Activated CD4-positive, alpha-beta T cell treated with anti-CD3 and anti-CD28 coated beads for 36 hours (primary cell): ENCODE measurements at regions of chr10 and their contacts with region 1.

Region 1: DNA sequence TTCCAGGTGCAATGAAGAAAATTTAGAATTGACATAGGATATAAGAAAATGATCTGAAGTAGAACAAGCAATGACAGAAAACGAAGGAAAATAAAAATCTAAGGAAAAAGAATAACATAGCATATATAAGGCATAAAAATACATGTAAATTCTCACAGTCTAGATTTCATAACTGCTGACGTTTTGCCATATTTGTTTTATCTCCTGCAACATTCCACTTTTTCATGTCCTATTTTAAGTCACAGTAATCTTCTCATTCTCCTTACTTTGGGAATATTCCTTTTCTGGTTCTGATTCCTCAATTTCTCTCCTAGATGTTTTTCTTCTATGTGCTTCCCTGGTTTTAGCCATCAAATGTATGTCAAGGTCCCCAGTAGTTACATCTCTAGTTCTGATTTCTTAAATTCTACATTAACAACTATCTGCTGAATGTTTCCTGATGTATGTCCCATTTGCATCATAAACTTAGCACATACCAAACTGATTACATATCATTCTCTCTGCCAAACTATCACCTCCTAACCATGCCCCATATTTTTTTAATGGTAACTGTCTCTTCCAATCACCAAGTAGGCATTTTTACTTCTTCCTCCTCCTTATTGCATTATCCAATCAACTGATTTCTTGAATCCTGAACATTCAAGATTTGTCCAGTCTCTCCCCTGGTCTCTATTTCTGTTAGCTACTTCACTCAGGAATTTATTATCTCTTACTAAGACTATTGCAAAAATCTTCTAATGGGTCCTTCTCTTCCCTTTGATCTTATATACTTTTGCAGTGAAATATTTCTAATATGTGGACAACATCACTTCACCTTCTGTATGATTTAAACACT is 171.3 kb downstream of the DNAJC1 start:
- DNase-seq: no peak
- ATAC-seq: no peak
- H3K4me3 Mint-ChIP-seq: no peak overlapping the region
- H3K27ac Mint-ChIP-seq: no peak overlapping the region
- H3K4me1 Mint-ChIP-seq: peaks cover 2% of the 10 kb centered on the region
- H3K27me3 Mint-ChIP-seq: no peaks in the 10 kb centered on the region

Region 2: GRCh38 chr10:22210277-22210676 is 378.1 kb after region 1 on chr10:
- CTCF ChIA-PET with region 1: no interaction called
- POLR2A ChIA-PET with region 1: no interaction called
- intact Hi-C with region 1: loop called in 1 of 2 experiments (anchors 10 kb)
- DNase-seq: no peak
- ATAC-seq: no peak
- H3K4me3 Mint-ChIP-seq: no peak overlapping the region
- H3K27ac Mint-ChIP-seq: no peak overlapping the region
- H3K4me1 Mint-ChIP-seq: no peaks in the 10 kb centered on the region
- H3K27me3 Mint-ChIP-seq: peaks cover 6% of the 10 kb centered on the region